ENCODE measurements at regions of chr7 and their contacts with region 1.

Region 1: DNA sequence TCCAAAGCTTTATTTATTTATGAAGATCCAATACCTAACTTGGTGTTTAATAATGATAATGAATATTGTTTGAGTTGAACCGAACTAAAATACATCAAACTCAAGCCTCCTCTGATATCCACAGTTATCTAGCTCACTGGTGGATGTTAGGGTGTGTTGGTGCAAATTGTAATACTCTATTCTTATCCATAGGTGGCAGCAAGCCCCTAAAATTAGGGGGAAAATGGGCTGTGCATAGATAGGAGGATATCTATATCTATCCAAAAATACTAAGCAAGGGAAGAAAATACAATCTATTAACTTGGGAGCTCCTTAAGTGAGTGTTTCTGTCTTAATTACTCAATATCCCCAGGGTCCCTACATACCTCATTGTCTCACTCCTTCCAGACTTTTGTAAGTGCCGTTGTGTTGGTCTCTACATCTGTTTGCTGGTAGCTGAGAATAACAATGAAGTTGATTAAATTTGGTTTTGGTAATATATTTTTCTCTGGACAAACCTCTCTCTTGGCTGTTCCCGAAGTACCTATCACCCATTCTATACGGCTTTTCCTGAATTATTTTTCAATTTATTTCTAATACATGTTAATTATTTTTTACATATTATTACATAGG is 55.0 kb upstream of the VWDE start:
- DNase-seq: peak; percentile 52
- H3K4me3 ChIP-seq: no peak overlapping the region
- H3K27ac ChIP-seq: no peak overlapping the region
- H3K4me1 ChIP-seq: no peaks in the 10 kb centered on the region
- H3K27me3 ChIP-seq: peaks cover 0 to 5% of the 10 kb centered on the region in 2 experiments
- CTCF ChIP-seq: peak; percentile 42 to 62
- POLR2A ChIP-seq: no peak

Region 2: DNA sequence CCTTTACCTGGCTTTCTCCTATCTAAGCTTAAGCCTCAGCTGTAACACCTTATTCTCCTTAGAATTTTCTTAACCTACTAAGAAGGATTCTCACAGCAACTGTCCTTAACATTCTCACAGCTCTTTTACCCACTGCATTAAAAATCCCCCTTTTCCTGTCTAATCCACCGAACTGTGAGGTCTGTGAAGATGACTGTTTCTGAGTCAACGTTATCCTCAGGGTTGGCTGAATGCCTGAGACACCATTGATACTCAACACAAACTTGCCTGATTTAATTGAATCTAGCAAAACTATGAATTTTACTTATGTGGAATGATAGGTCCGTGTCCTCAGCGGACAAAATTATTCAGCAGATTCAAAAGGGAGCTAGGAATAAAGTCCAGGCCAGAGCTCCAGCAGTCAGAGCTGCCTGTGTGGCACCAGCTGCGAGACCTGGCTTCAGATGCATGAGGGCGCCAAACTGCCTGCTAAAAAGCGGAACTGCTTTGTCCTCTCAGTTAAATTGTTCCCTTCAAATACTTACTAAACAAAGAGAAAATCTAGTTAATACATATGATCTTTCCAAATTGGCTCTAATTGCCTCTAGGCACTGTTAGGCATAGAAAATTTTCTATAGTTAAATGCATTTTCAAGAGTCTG is 21.6 kb before region 1 on chr7:
- CTCF ChIA-PET with region 1: interaction called, 34 read pairs
- POLR2A ChIA-PET with region 1: no interaction called
- dilution Hi-C with region 1: no loop called
- intact Hi-C with region 1: no loop called
- DNase-seq: no peak
- H3K4me3 ChIP-seq: no peak overlapping the region
- H3K27ac ChIP-seq: no peak overlapping the region
- H3K4me1 ChIP-seq: no peaks in the 10 kb centered on the region
- H3K27me3 ChIP-seq: peaks cover 6 to 8% of the 10 kb centered on the region in 2 experiments
- CTCF ChIP-seq: no peak
- POLR2A ChIP-seq: no peak

Region 3: GRCh38 chr7:12469568-12469967 is 10.9 kb after region 1 on chr7:
- CTCF ChIA-PET with region 1: interaction called, 84 read pairs
- POLR2A ChIA-PET with region 1: no interaction called
- dilution Hi-C with region 1: no loop called
- intact Hi-C with region 1: no loop called
- DNase-seq: no peak
- H3K4me3 ChIP-seq: no peak overlapping the region
- H3K27ac ChIP-seq: no peak overlapping the region
- H3K4me1 ChIP-seq: no peaks in the 10 kb centered on the region
- H3K27me3 ChIP-seq: no peaks in the 10 kb centered on the region
- CTCF ChIP-seq: no peak
- POLR2A ChIP-seq: no peak

Region 4: GRCh38 chr7:12481722-12482121 is 23.1 kb after region 1 on chr7:
- CTCF ChIA-PET with region 1: interaction called, 89 read pairs
- POLR2A ChIA-PET with region 1: no interaction called
- dilution Hi-C with region 1: no loop called
- intact Hi-C with region 1: no loop called
- DNase-seq: no peak
- H3K4me3 ChIP-seq: no peak overlapping the region
- H3K27ac ChIP-seq: no peak overlapping the region
- H3K4me1 ChIP-seq: no peaks in the 10 kb centered on the region
- H3K27me3 ChIP-seq: no peaks in the 10 kb centered on the region
- CTCF ChIP-seq: no peak
- POLR2A ChIP-seq: no peak

Region 5: DNA sequence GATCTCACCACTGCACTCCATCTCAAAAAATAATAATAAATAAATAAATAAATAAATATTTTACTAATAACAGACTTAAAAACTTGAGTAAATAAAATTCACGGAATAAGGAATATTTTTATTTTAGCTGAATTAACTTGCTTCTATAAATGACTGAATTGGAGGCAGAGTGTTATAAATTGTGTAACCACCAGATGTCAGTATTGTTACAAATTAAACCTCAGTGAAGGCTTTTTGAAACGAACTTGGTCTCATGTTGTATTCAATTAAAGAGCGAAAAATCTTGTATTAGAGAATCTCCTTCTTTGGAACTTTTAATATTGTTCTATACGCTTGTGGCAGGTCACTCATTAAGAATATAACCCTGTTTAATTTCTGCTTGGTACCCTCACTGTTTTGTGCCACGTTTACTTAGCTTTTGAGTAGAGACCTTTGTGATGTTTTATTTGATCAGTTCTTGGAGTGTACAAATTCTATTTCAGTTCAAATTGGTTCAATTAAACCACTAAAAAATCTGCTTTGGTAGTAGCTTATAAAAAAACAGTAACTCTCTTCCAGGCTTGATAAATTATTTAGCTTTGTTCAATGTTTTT is 66.3 kb after region 1 on chr7:
- CTCF ChIA-PET with region 1: interaction called, 13 read pairs
- POLR2A ChIA-PET with region 1: no interaction called
- dilution Hi-C with region 1: no loop called
- intact Hi-C with region 1: no loop called
- DNase-seq: peak; percentile 75
- H3K4me3 ChIP-seq: no peak overlapping the region
- H3K27ac ChIP-seq: no peak overlapping the region
- H3K4me1 ChIP-seq: no peaks in the 10 kb centered on the region
- H3K27me3 ChIP-seq: peaks cover 2 to 24% of the 10 kb centered on the region in 2 experiments
- CTCF ChIP-seq: peak; percentile 7 to 33
- POLR2A ChIP-seq: no peak

Measured in endothelial cell of umbilical vein (primary cell).